ENCODE measurements at regions of chr1 and their contacts with region 1.

Region 1: GRCh38 chr1:116377541-116378529 is 4.8 kb downstream of the ATP1A1 start:
- DNase-seq: peak in 13 of 14 experiments; percentile 9 to 83 (median 28)
- ATAC-seq: peak; percentile 62
- H3K4me3 ChIP-seq: peak overlapping the region; percentile 51
- H3K4me3 Mint-ChIP-seq: peak overlapping the region; percentile 98
- H3K27ac ChIP-seq: peak overlapping the region; percentile 88 to 98
- H3K27ac Mint-ChIP-seq: peak overlapping the region; percentile 93
- H3K4me1 ChIP-seq: peaks cover 62% of the 10 kb centered on the region
- H3K4me1 Mint-ChIP-seq: peaks cover 86% of the 10 kb centered on the region
- H3K27me3 ChIP-seq: no peaks in the 10 kb centered on the region
- H3K27me3 Mint-ChIP-seq: no peaks in the 10 kb centered on the region
- CTCF ChIP-seq: no peak

Region 2: DNA sequence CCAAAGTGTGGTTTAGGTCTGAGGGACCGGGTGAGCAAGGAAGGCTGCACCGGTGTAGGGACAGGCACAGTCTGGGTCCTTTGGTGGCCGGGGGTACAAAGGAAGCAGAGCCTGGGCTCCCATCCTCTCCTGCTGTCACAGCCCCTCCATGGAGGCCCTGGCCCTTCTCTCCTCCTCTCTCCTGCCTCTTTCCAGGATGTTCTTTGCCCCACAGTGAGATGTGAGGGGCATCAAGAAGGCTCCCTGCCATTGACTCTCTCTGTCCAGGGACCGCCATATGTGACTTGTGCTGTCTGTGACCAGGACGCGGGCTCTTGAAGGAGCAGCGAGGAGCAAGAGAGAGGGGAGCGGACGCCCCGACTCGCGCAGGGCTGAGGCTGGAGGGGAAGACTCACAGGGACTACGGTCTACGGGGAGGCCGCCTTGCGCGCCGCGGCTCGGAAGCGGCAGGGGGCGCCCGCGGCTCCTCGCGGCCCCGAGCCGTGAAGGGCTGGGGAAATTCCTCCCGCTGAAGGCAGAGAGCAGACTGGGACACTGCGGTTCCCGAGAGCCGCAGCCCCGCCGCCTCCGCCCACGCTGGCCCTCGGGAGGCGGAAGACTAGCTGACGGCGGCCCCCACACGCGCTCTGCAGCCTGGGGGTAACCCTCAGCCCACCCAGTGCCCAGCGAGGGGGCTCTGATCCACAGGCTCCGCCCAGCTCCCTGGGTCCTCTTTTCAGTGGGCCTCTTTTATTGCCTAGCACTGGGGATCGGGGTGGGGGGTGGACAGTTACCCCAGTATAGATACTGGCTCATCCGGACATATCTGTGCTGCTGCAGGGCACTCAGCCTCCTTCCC is 225.9 kb before region 1 on chr1:
- CTCF ChIA-PET with region 1: no interaction called
- POLR2A ChIA-PET with region 1: interaction called, 7 read pairs
- intact Hi-C with region 1: loop called in 1 of 2 experiments (anchors 5 kb)
- DNase-seq: peak; percentile 51 to 93 (median 69)
- ATAC-seq: peak; percentile 89
- H3K4me3 ChIP-seq: peak overlapping the region; percentile 48
- H3K4me3 Mint-ChIP-seq: peak overlapping the region; percentile 81
- H3K27ac ChIP-seq: peak overlapping the region; percentile 45 to 69
- H3K27ac Mint-ChIP-seq: peak overlapping the region; percentile 91
- H3K4me1 ChIP-seq: peaks cover 22% of the 10 kb centered on the region
- H3K4me1 Mint-ChIP-seq: peaks cover 31% of the 10 kb centered on the region
- H3K27me3 ChIP-seq: no peaks in the 10 kb centered on the region
- H3K27me3 Mint-ChIP-seq: no peaks in the 10 kb centered on the region
- CTCF ChIP-seq: peak; percentile 86

Region 3: GRCh38 chr1:116232989-116233514 is 144.8 kb before region 1 on chr1:
- CTCF ChIA-PET with region 1: no interaction called
- POLR2A ChIA-PET with region 1: interaction called, 4 read pairs
- intact Hi-C with region 1: loop called (anchors 1 to 5 kb)
- DNase-seq: peak in 12 of 14 experiments; percentile 10 to 71 (median 21)
- ATAC-seq: peak; percentile 99
- H3K4me3 ChIP-seq: no peak overlapping the region
- H3K4me3 Mint-ChIP-seq: no peak overlapping the region
- H3K27ac ChIP-seq: no peak overlapping the region
- H3K27ac Mint-ChIP-seq: peak overlapping the region; percentile 2
- H3K4me1 ChIP-seq: peaks cover 15% of the 10 kb centered on the region
- H3K4me1 Mint-ChIP-seq: peaks cover 26% of the 10 kb centered on the region
- H3K27me3 ChIP-seq: no peaks in the 10 kb centered on the region
- H3K27me3 Mint-ChIP-seq: no peaks in the 10 kb centered on the region
- CTCF ChIP-seq: peak; percentile 64

Region 4: GRCh38 chr1:116345843-116346242 is 32.0 kb before region 1 on chr1:
- CTCF ChIA-PET with region 1: no interaction called
- POLR2A ChIA-PET with region 1: interaction called, 35 read pairs
- intact Hi-C with region 1: loop called in 1 of 2 experiments (anchors 2 kb)
- DNase-seq: peak; percentile 34 to 91 (median 59)
- ATAC-seq: peak; percentile 91
- H3K4me3 ChIP-seq: no peak overlapping the region
- H3K4me3 Mint-ChIP-seq: peak overlapping the region; percentile 18
- H3K27ac ChIP-seq: peak overlapping the region; percentile 33 to 49
- H3K27ac Mint-ChIP-seq: peak overlapping the region; percentile 87
- H3K4me1 ChIP-seq: peaks cover 56% of the 10 kb centered on the region
- H3K4me1 Mint-ChIP-seq: peaks cover 82% of the 10 kb centered on the region
- H3K27me3 ChIP-seq: no peaks in the 10 kb centered on the region
- H3K27me3 Mint-ChIP-seq: no peaks in the 10 kb centered on the region
- CTCF ChIP-seq: no peak

Region 5: DNA sequence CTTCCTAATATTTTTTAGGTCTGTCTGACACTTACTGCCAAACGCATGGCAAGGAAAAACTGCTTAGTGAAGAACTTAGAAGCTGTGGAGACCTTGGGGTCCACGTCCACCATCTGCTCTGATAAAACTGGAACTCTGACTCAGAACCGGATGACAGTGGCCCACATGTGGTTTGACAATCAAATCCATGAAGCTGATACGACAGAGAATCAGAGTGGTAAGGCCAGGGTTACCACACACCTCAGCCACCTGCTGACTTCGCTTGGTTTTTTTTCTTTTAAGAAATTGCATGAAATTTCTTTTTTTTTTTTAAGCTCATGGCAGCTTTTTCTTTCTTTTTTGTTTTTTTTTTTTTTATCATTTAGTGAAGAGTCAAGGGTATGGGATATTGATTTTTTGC is 12.4 kb after region 1 on chr1:
- CTCF ChIA-PET with region 1: interaction called, 5 read pairs
- POLR2A ChIA-PET with region 1: interaction called, 18 read pairs
- intact Hi-C with region 1: loop called (anchors 1 to 2 kb)
- DNase-seq: peak in 7 of 14 experiments; percentile 8 to 85 (median 39)
- ATAC-seq: peak; percentile 88
- H3K4me3 ChIP-seq: no peak overlapping the region
- H3K4me3 Mint-ChIP-seq: no peak overlapping the region
- H3K27ac ChIP-seq: peak overlapping the region; percentile 13 to 22
- H3K27ac Mint-ChIP-seq: peak overlapping the region; percentile 69
- H3K4me1 ChIP-seq: peaks cover 26% of the 10 kb centered on the region
- H3K4me1 Mint-ChIP-seq: peaks cover 68% of the 10 kb centered on the region
- H3K27me3 ChIP-seq: no peaks in the 10 kb centered on the region
- H3K27me3 Mint-ChIP-seq: no peaks in the 10 kb centered on the region
- CTCF ChIP-seq: no peak

Region 6: DNA sequence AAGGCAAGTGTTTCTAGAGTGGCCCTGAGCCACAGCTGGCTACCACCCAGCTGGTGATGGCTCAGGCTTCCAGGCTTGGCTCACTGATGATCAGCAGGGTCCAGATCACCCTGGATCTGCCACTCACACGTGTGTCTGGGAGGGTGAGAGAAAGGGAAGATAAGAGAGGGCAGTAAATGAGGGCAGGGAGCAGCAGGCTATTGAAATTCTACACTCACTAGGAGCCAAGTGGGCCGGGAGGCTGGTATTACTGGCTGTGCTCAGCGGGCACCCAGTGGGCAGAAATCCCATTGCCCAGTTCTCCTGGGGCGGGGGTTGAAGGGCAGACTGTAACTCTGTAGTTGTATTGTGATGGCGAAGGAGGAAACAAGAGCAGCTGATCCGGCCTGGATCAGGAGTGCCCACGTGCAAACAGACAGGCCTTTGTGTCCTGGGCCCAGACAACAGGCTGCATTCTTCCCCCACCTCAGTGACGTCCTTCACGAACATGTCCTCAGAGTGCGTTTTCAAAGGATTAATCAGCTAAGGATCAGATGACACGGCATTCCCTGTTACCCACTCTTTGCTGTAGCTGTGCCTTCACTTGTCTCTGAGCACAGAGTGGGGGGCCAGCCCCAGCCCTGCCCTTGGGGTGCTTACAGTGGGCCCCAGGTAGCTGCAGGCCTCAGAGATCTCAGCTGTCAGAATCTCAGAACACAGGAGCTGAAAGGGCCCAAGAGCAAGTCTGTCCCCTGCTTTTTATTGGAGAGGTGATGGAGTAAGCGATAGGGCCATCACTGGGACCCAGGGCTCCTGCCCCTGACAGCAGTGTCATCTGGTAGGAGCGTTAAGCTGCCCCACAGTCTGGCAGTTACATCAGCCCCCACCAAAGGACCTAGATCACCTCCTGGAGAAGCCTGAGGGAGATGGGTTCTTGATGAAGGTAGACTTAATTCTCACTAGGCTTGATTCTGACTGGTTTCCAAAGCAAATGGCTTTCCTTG is 55.7 kb after region 1 on chr1:
- CTCF ChIA-PET with region 1: no interaction called
- POLR2A ChIA-PET with region 1: interaction called, 12 read pairs
- intact Hi-C with region 1: loop called in 1 of 2 experiments (anchors 5 kb)
- DNase-seq: no peak
- ATAC-seq: no peak
- H3K4me3 ChIP-seq: no peak overlapping the region
- H3K4me3 Mint-ChIP-seq: no peak overlapping the region
- H3K27ac ChIP-seq: no peak overlapping the region
- H3K27ac Mint-ChIP-seq: no peak overlapping the region
- H3K4me1 ChIP-seq: no peaks in the 10 kb centered on the region
- H3K4me1 Mint-ChIP-seq: no peaks in the 10 kb centered on the region
- H3K27me3 ChIP-seq: no peaks in the 10 kb centered on the region
- H3K27me3 Mint-ChIP-seq: no peaks in the 10 kb centered on the region
- CTCF ChIP-seq: no peak

Region 7: DNA sequence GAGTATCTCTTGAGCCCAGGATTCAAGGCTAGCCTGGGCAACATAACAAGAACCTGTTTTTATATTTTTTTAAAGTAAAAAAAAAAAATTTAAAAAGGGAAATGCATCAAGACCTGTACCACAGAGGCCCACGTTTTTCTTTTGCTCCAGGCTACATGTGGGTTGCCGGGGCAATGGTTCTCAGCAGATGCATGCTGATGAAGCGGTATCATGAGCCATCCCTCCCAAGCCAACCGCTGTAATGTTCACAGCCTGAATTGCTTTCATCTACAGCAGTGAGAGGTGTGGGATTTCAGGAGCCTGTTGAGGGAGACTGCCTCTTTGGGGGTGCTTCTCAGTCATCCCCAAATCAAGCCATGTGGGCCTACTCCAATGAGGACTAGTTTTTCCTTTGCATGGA is 132.5 kb after region 1 on chr1:
- CTCF ChIA-PET with region 1: no interaction called
- POLR2A ChIA-PET with region 1: no interaction called
- intact Hi-C with region 1: no loop called
- DNase-seq: no peak
- ATAC-seq: no peak
- H3K4me3 ChIP-seq: no peak overlapping the region
- H3K4me3 Mint-ChIP-seq: no peak overlapping the region
- H3K27ac ChIP-seq: no peak overlapping the region
- H3K27ac Mint-ChIP-seq: no peak overlapping the region
- H3K4me1 ChIP-seq: peaks cover 70% of the 10 kb centered on the region
- H3K4me1 Mint-ChIP-seq: peaks cover 58% of the 10 kb centered on the region
- H3K27me3 ChIP-seq: no peaks in the 10 kb centered on the region
- H3K27me3 Mint-ChIP-seq: no peaks in the 10 kb centered on the region
- CTCF ChIP-seq: no peak